ENCODE measurements at regions of chr17 and their contacts with region 1.

Region 1: DNA sequence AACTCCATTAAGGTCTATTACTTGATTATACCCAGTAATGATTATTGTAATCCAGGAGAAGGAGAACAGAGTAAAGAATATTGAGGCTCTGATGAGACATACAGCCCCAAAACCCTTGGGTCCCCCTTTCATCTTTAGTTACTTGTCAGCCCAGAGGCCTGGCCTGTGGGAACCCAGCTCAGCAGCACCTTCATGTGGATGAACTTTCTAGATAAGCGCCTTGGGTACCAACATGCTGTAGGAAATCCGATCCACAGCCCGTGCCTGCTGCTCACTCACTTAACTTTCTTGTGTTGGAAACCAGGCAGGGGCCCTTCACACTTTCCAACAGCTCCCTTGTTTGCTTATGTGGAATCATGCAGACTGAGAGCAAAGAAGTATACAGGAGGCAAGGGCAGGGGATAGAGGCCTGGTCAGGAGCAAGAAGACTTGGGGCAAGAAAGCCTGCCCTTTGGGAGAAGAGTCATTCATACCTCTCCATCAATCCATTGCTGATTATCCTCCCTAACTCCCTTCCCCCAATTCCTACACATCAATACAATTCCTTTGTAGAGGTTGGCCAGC is 64.0 kb upstream of the SOX9 start:
- DNase-seq: peak; percentile 68
- H3K4me3 ChIP-seq: peak overlapping the region in 1 of 3 experiments; percentile 13
- H3K27ac ChIP-seq: no peak overlapping the region
- H3K4me1 ChIP-seq: peaks cover 42% of the 10 kb centered on the region
- H3K27me3 ChIP-seq: no peaks in the 10 kb centered on the region
- CTCF ChIP-seq: peak in 1 of 2 donors; percentile 41

Region 2: GRCh38 chr17:71976011-71976649 is 80.7 kb before region 1 on chr17:
- CTCF ChIA-PET with region 1: no interaction called
- dilution Hi-C with region 1: no loop called
- in situ Hi-C with region 1: no loop called
- intact Hi-C with region 1: loop called (anchors 5 kb)
- DNase-seq: peak; percentile 98
- H3K4me3 ChIP-seq: peak overlapping the region in 1 of 3 experiments; percentile 27
- H3K27ac ChIP-seq: peak overlapping the region; percentile 87
- H3K4me1 ChIP-seq: peaks cover 34% of the 10 kb centered on the region
- H3K27me3 ChIP-seq: no peaks in the 10 kb centered on the region
- CTCF ChIP-seq: no peak

Region 3: GRCh38 chr17:72004611-72005331 is 52.0 kb before region 1 on chr17:
- CTCF ChIA-PET with region 1: no interaction called
- dilution Hi-C with region 1: no loop called
- in situ Hi-C with region 1: no loop called
- intact Hi-C with region 1: no loop called
- DNase-seq: no peak
- H3K4me3 ChIP-seq: no peak overlapping the region
- H3K27ac ChIP-seq: no peak overlapping the region
- H3K4me1 ChIP-seq: peaks cover 20% of the 10 kb centered on the region
- H3K27me3 ChIP-seq: no peaks in the 10 kb centered on the region
- CTCF ChIP-seq: no peak